Gastrocnemius medialis (tissue), 4 donors: ENCODE measurements at regions of chr3 and their contacts with region 1.

Region 1: GRCh38 chr3:193572426-193572908 is 17.8 kb upstream of the ATP13A4 start:
- DNase-seq: no peak
- ATAC-seq: peak; percentile 66 to 69
- H3K4me3 ChIP-seq: no peak overlapping the region
- H3K27ac ChIP-seq: no peak overlapping the region
- H3K4me1 ChIP-seq: no peaks in the 10 kb centered on the region
- H3K27me3 ChIP-seq: no peaks in the 10 kb centered on the region
- CTCF ChIP-seq: peak; percentile 31 to 75 (median 51)
- POLR2A ChIP-seq: no peak

Region 2: DNA sequence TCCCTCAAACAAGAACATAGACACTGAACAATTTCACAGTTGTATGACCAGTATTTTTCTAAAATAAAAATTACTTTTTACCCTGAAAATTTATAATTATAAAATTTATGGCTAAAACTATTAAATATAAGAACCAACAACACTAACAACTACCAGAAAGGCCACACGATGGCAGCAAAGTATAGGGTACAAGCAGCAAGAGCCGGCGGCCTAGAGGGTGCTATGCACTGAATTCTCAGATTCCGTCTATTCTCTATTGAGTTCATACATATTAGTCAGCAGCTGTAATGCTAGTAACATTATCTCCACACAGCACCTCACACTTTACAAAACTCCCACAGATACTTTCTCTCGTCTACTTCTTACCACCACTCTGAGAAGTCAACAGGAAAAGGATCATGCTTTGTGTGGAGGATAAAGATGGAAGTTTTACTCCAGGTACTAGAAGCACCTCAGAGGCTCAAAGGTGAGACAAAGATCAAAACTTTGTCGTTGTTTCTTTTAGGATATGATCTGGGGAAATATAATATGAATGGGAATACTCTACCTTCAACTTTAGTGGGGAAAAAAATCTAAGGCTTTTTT is 1005.7 kb before region 1 on chr3:
- in situ Hi-C with region 1: loop called in 2 of 4 experiments (anchors 25 kb)
- intact Hi-C with region 1: loop called (anchors 2 kb)
- DNase-seq: peak; percentile 25 to 29
- ATAC-seq: peak; percentile 57 to 72
- H3K4me3 ChIP-seq: no peak overlapping the region
- H3K27ac ChIP-seq: no peak overlapping the region
- H3K4me1 ChIP-seq: no peaks in the 10 kb centered on the region
- H3K27me3 ChIP-seq: no peaks in the 10 kb centered on the region
- CTCF ChIP-seq: peak; percentile 40 to 83 (median 59)
- POLR2A ChIP-seq: no peak

Region 3: DNA sequence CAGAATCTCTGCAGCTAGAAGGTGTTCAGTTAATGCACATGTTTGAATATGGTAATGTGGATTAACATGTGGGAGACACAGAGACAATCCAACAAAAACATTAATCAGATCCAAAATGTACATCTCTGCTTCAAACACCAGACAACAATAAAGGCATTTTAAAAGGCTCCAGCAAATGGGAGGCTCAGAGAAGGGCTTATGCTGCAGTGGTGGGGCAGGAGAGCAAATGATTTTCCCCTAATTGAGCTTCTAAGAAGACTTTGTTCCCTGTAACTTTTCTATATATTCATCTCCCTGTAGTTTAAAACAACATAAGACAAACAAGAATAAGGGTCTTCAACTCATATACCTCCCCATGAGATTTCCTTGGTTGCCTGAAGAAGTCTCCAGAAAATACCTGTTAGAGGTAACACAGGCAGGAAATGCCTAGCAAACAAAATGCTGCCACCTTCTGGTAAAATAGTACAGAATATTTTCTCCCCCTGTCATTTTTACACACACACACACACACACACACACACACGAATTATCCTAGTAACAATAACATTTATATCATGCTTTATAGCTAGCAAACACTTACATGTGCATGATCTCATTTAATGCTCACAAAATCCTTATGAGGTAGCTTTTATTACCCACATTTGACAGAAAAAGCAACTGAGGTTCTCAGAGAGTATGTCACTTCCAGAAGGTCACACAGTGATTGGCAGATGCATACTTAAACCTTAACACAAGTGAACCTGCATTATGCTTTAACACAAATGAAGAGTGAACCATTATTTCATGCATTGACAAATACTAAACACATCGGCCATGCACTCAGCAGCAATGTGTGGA is 531.4 kb before region 1 on chr3:
- in situ Hi-C with region 1: loop called in 2 of 4 experiments (anchors 25 kb)
- intact Hi-C with region 1: no loop called
- DNase-seq: no peak
- ATAC-seq: no peak
- H3K4me3 ChIP-seq: no peak overlapping the region
- H3K27ac ChIP-seq: no peak overlapping the region
- H3K4me1 ChIP-seq: no peaks in the 10 kb centered on the region
- H3K27me3 ChIP-seq: no peaks in the 10 kb centered on the region
- CTCF ChIP-seq: peak; percentile 33 to 66 (median 55)
- POLR2A ChIP-seq: no peak

Region 4: GRCh38 chr3:193207290-193208273 is 364.9 kb before region 1 on chr3:
- in situ Hi-C with region 1: loop called in 1 of 4 experiments (anchors 25 kb)
- intact Hi-C with region 1: no loop called
- DNase-seq: no peak
- ATAC-seq: peak; percentile 92 to 94
- H3K4me3 ChIP-seq: no peak overlapping the region
- H3K27ac ChIP-seq: peak overlapping the region; percentile 21 to 48 (median 28)
- H3K4me1 ChIP-seq: peaks cover 15 to 32% of the 10 kb centered on the region in 2 donors
- H3K27me3 ChIP-seq: no peaks in the 10 kb centered on the region
- CTCF ChIP-seq: no peak
- POLR2A ChIP-seq: no peak

Region 5: GRCh38 chr3:193452338-193452737 is 120.1 kb before region 1 on chr3:
- in situ Hi-C with region 1: no loop called
- intact Hi-C with region 1: no loop called
- DNase-seq: no peak
- ATAC-seq: no peak
- H3K4me3 ChIP-seq: no peak overlapping the region
- H3K27ac ChIP-seq: no peak overlapping the region
- H3K4me1 ChIP-seq: no peaks in the 10 kb centered on the region
- H3K27me3 ChIP-seq: no peaks in the 10 kb centered on the region
- CTCF ChIP-seq: no peak
- POLR2A ChIP-seq: no peak

Region 6: GRCh38 chr3:193614430-193614829 is 42.0 kb after region 1 on chr3:
- in situ Hi-C with region 1: no loop called
- intact Hi-C with region 1: no loop called
- DNase-seq: no peak
- ATAC-seq: no peak
- H3K4me3 ChIP-seq: no peak overlapping the region
- H3K27ac ChIP-seq: no peak overlapping the region
- H3K4me1 ChIP-seq: no peaks in the 10 kb centered on the region
- H3K27me3 ChIP-seq: no peaks in the 10 kb centered on the region
- CTCF ChIP-seq: no peak
- POLR2A ChIP-seq: no peak

Region 7: GRCh38 chr3:193665370-193665989 is 93.0 kb after region 1 on chr3:
- in situ Hi-C with region 1: no loop called
- intact Hi-C with region 1: no loop called
- DNase-seq: no peak
- ATAC-seq: no peak
- H3K4me3 ChIP-seq: no peak overlapping the region
- H3K27ac ChIP-seq: no peak overlapping the region
- H3K4me1 ChIP-seq: no peaks in the 10 kb centered on the region
- H3K27me3 ChIP-seq: no peaks in the 10 kb centered on the region
- CTCF ChIP-seq: peak in 2 of 5 experiments; percentile 19 to 41
- POLR2A ChIP-seq: no peak

Region 8: DNA sequence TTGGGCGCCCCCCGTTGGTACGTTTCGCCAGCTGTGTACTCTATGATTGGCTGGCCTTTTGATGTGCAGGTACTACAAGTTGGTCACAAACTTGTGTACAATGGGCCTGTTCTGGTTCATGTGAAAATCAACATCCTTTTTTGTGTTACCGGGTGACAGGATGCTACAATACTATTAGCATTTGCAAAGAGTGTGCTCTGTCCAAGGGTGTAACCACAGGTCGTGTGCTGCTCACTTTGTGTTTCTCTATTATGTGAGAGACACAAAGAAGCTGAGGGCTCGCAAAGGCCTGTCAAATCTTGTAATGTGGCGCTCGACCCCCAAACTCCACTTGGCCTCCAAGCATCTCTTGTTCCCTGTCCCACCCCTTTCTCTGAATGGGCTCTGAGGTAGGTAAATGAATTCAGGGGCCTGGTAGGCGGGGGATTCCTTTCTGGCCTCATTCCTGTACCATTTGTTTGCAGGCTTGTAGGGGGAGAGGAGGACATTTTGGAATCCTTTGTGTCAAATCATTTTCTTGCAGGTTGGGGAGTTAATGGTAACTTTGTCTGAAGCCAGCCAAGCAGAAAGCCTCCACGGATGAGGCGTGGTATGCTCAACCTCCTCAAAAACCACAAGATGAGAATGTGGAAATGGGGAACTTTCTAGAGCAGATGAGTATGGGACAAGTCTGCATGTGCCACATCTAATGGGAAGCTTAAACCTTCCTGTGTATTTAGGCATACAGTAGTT is 129.6 kb after region 1 on chr3:
- in situ Hi-C with region 1: no loop called
- intact Hi-C with region 1: no loop called
- DNase-seq: no peak
- ATAC-seq: no peak
- H3K4me3 ChIP-seq: no peak overlapping the region
- H3K27ac ChIP-seq: no peak overlapping the region
- H3K4me1 ChIP-seq: no peaks in the 10 kb centered on the region
- H3K27me3 ChIP-seq: no peaks in the 10 kb centered on the region
- CTCF ChIP-seq: no peak
- POLR2A ChIP-seq: no peak